Dendritic cell treated with granulocyte-macrophage colony-stimulating factor and Interleukin-4, amounts not matched to agents 40 ng/mL and 50 ng/mL, for 4 days (primary cell): ENCODE measurements at regions of chr20 and their contacts with region 1.

Region 1: DNA sequence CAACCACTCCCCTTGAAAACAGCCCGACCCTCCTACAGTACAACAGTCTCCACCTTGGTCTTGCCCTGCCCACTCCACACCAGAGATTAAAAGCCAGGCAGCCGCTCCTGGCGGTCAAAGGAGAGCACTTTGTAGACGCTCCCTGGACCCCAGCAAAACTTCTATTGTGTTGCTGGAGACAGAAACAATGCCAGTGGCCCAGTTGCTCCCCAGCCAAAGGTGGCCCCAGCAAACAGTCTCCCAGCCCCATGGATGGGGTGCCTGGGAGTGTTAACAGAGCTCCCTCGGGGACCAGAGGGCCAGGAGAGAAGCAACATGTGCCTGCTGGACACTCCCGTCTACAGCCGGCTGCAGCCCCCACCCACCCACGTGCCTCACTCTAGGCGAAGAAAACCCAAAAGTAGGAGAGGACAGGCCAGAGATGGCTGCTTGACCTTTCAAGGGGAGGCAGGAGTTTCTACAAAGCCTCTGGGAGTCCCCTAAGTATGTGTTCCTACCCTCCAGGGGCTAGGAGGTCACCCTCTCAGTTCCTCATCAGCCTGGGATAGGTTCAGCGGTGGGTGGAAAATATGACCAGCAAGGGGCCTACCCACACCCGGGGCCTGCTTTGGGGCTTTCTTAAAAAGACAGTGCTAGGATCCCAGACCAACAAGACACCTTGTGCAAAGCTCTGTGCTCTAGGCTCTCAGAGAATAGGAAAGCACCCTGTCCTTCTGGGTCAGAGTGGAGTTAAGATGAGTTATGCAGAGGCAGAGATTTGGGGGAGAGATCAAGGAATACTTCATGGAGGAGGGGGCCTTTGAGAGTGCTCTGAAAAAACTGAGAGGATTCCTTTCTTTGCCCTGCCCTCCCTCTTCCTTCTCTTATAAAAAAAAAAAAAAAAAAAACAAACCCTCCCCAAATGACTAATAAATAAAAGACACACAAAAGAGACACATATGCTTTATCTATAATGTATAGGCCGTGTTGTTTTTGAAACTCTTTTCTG is 19.0 kb upstream of the PREX1 start:
- H3K4me3 Mint-ChIP-seq: peak overlapping the region; percentile 20
- H3K27ac Mint-ChIP-seq: peak overlapping the region; percentile 82
- H3K4me1 Mint-ChIP-seq: peaks cover 68% of the 10 kb centered on the region
- H3K27me3 Mint-ChIP-seq: peaks cover 2% of the 10 kb centered on the region

Region 2: GRCh38 chr20:48224520-48224919 is 622.3 kb before region 1 on chr20:
- intact Hi-C with region 1: no loop called
- H3K4me3 Mint-ChIP-seq: no peak overlapping the region
- H3K27ac Mint-ChIP-seq: no peak overlapping the region
- H3K4me1 Mint-ChIP-seq: no peaks in the 10 kb centered on the region
- H3K27me3 Mint-ChIP-seq: peaks cover 1% of the 10 kb centered on the region

Region 3: GRCh38 chr20:48866502-48867335 is 19.9 kb after region 1 on chr20:
- intact Hi-C with region 1: no loop called
- H3K4me3 Mint-ChIP-seq: no peak overlapping the region
- H3K27ac Mint-ChIP-seq: peak overlapping the region; percentile 61
- H3K4me1 Mint-ChIP-seq: peaks cover 35% of the 10 kb centered on the region
- H3K27me3 Mint-ChIP-seq: no peaks in the 10 kb centered on the region

Region 4: DNA sequence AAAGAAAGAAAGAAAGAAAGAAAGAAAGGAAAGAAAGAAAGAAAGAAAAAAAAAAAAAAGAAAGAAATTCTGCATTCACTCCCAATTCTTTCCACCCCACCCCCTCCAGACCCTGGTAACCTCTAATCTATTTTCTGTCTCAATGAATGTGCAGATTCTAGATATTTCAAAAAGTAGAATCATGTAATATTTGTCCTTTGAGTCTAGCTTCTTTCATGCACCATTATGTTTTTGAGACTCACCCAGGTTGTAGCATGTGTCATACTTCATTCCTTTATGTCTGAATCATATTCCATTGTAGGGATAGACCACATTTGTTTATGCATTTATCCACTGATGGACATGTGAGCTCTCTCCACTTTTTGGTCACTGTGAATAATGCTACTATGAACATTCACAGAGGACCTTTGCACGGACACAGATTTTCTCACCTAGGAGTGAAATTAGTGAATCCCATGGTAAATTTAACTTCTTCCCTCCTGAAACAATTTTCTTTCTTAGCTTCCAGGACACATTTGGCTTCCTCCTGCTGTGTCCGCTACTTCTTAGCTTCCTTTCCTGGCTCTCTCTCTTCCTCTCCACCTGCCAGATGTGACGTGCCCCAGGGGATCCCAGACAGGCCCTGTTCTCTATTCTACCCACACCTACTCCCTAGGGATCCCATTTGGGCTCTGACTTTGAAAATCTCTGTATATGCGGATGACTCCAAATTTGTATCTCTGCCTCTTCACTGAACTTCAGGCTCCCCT is 50.6 kb after region 1 on chr20:
- intact Hi-C with region 1: loop called (anchors 10 kb)
- H3K4me3 Mint-ChIP-seq: no peak overlapping the region
- H3K27ac Mint-ChIP-seq: no peak overlapping the region
- H3K4me1 Mint-ChIP-seq: peaks cover 46% of the 10 kb centered on the region
- H3K27me3 Mint-ChIP-seq: no peaks in the 10 kb centered on the region